Vagina (tissue), 2 donors: ENCODE measurements at regions of chr6 and their contacts with region 1.

Region 1: GRCh38 chr6:32529697-32530429 is at the start of gene HLA-DRB5:
- DNase-seq: no peak
- H3K4me3 ChIP-seq: peak within 1 kb of the TSS in 1 of 2 donors; percentile 16
- H3K27ac ChIP-seq: no peak within 1 kb of the TSS
- H3K4me1 ChIP-seq: no peaks in the 10 kb centered on the region
- H3K27me3 ChIP-seq: no peaks in the 10 kb centered on the region
- CTCF ChIP-seq: no peak
- POLR2A ChIP-seq: no peak
- total RNA-seq, gene HLA-DRB5: 4.7 TPM

Region 2: GRCh38 chr6:31419842-31420241 is 1110.0 kb before region 1 on chr6:
- intact Hi-C with region 1: no loop called
- DNase-seq: peak; percentile 46 to 69
- H3K4me3 ChIP-seq: no peak overlapping the region
- H3K27ac ChIP-seq: no peak overlapping the region
- H3K4me1 ChIP-seq: no peaks in the 10 kb centered on the region
- H3K27me3 ChIP-seq: no peaks in the 10 kb centered on the region
- CTCF ChIP-seq: no peak
- POLR2A ChIP-seq: no peak

Region 3: GRCh38 chr6:32589598-32590449 is 60.0 kb after region 1 on chr6 and contains the start of gene HLA-DRB1:
- intact Hi-C with region 1: loop called (anchors 5 kb)
- DNase-seq: no peak
- H3K4me3 ChIP-seq: peak within 1 kb of the TSS in 1 of 2 donors; percentile 24
- H3K27ac ChIP-seq: no peak within 1 kb of the TSS
- H3K4me1 ChIP-seq: no peaks in the 10 kb centered on the region
- H3K27me3 ChIP-seq: no peaks in the 10 kb centered on the region
- CTCF ChIP-seq: no peak
- POLR2A ChIP-seq: no peak
- total RNA-seq, gene HLA-DRB1: 25.5 TPM